ENCODE measurements at regions of chr18 and their contacts with region 1.

Region 1: DNA sequence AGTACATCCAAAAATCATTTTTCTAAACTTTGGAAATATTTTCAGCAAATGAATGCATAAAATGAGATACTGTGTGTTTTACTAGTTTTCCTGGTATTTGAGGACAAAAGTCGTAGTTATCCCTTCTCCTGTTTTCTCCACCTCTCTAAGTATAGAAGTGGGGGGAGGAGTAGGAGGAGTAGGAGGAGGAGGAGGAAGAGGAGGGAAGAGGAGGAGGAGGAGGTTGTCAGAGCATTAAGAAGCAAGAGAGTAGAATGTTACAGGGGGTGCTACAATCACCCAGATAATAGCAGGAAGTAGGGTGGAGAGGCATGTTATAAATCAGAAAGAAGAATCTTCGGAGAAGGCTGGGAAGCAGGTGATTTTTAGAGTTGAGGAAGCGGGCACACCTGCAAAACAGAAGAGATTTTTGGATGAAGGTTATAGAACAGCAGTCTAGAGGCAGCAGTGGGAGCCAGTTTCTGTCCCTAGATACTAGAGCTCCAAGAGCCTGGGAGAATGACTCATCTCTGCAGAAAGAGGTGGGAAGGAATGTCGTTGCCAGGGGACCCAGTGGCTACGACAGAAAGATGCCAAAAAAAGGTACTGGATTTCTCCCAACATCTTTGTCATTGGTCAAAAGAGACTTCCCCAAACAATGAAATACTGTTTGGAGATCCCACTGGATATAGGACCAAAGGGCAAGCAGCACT is 44.2 kb upstream of the AQP4 start:
- DNase-seq: peak in 1 of 2 donors; percentile 53
- H3K4me3 ChIP-seq: no peak overlapping the region
- H3K27ac ChIP-seq: no peak overlapping the region
- H3K4me1 ChIP-seq: no peaks in the 10 kb centered on the region
- H3K27me3 ChIP-seq: no peaks in the 10 kb centered on the region
- CTCF ChIP-seq: no peak
- POLR2A ChIP-seq: no peak

Region 2: DNA sequence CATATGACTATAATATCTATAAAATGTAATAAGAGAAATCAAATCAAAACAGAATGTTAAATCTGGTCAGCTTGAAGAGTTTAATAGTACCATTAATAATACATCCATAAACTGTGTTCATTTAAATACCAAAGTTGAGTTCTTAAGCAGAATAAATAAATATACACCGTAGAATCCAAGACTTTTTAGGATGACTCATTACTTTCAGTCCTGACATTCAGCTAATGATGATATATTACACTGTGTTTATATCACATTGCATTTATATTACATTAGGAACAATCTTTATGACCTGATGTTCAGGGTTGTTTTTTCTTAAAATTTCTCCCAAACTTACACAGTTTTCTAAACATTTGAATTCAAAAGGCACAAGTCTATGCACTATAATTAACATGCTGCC is 1150.6 kb before region 1 on chr18:
- intact Hi-C with region 1: loop called (anchors 5 kb)
- DNase-seq: no peak
- H3K4me3 ChIP-seq: no peak overlapping the region
- H3K27ac ChIP-seq: no peak overlapping the region
- H3K4me1 ChIP-seq: no peaks in the 10 kb centered on the region
- H3K27me3 ChIP-seq: no peaks in the 10 kb centered on the region
- CTCF ChIP-seq: no peak
- POLR2A ChIP-seq: no peak

Region 3: GRCh38 chr18:26057344-26057773 is 852.4 kb before region 1 on chr18:
- intact Hi-C with region 1: no loop called
- DNase-seq: no peak
- H3K4me3 ChIP-seq: no peak overlapping the region
- H3K27ac ChIP-seq: no peak overlapping the region
- H3K4me1 ChIP-seq: no peaks in the 10 kb centered on the region
- H3K27me3 ChIP-seq: no peaks in the 10 kb centered on the region
- CTCF ChIP-seq: no peak
- POLR2A ChIP-seq: no peak

Region 4: DNA sequence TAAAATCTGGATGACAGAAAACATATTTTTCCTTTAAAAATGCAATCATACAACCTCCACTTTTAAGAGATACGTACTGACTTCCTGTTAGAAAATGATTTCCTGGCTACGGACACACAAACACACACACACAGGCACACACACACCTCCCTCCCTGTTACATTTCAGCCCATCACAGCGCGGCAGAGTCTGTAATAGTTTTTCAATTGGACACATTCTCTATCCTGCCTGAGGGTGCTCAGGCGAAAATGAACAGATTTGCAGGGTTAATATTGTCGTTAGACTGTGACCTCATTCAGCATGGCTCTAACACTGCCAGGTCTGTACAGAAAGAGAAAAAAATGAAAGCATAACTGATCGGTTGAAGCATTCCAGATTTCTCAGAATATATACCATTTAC is 406.4 kb before region 1 on chr18:
- intact Hi-C with region 1: no loop called
- DNase-seq: no peak
- H3K4me3 ChIP-seq: peak overlapping the region in 2 of 3 donors; percentile 7 to 12
- H3K27ac ChIP-seq: peak overlapping the region in 1 of 2 donors; percentile 27
- H3K4me1 ChIP-seq: no peaks in the 10 kb centered on the region
- H3K27me3 ChIP-seq: no peaks in the 10 kb centered on the region
- CTCF ChIP-seq: no peak
- POLR2A ChIP-seq: no peak

Region 5: DNA sequence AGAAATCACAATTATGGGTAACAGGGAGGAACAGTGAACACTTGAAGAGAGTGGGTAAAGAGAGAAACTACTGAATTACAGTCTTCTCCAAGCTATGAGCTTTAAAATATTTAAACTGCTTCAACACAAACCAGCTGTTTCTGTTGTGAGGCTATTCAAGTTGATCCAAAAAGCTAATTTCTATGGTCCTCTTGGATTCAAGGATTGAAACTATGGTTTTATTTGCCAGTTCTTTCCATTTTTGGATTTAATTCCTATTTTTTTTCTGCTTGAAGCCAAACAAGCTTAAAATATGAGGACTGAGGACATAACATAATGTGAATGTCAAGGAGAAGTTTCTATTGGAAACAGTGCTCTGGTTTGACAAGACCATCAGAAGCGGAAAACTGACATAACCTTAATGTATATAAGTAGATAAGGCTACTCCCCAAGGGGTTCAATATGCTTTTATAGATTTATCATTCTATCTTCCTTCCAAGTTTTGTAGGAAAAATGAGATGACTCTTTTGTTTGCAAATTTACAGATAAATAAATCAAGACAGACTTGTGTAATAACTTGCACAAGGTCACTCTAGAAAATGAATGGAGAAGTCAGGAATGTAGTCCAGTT is 16.4 kb after region 1 on chr18:
- intact Hi-C with region 1: no loop called
- DNase-seq: no peak
- H3K4me3 ChIP-seq: no peak overlapping the region
- H3K27ac ChIP-seq: no peak overlapping the region
- H3K4me1 ChIP-seq: no peaks in the 10 kb centered on the region
- H3K27me3 ChIP-seq: no peaks in the 10 kb centered on the region
- CTCF ChIP-seq: no peak
- POLR2A ChIP-seq: no peak

Region 6: GRCh38 chr18:27636576-27637085 is 726.9 kb after region 1 on chr18:
- intact Hi-C with region 1: no loop called
- DNase-seq: no peak
- H3K4me3 ChIP-seq: no peak overlapping the region
- H3K27ac ChIP-seq: no peak overlapping the region
- H3K4me1 ChIP-seq: no peaks in the 10 kb centered on the region
- H3K27me3 ChIP-seq: no peaks in the 10 kb centered on the region
- CTCF ChIP-seq: no peak
- POLR2A ChIP-seq: no peak

Measured in breast epithelium (tissue), 4 donors.